Endothelial cell of umbilical vein (primary cell): ENCODE measurements at regions of chr19 and their contacts with region 1.

Region 1: GRCh38 chr19:8466018-8466417 is 21.2 kb downstream of the HNRNPM start:
- DNase-seq: no peak
- H3K4me3 ChIP-seq: no peak overlapping the region
- H3K27ac ChIP-seq: no peak overlapping the region
- H3K4me1 ChIP-seq: no peaks in the 10 kb centered on the region
- H3K27me3 ChIP-seq: no peaks in the 10 kb centered on the region
- CTCF ChIP-seq: no peak
- POLR2A ChIP-seq: no peak

Region 2: GRCh38 chr19:8396563-8397203 is 69.3 kb before region 1 on chr19:
- CTCF ChIA-PET with region 1: no interaction called
- POLR2A ChIA-PET with region 1: no interaction called
- dilution Hi-C with region 1: no loop called
- intact Hi-C with region 1: loop called (anchors 2 kb)
- DNase-seq: peak; percentile 74
- H3K4me3 ChIP-seq: no peak overlapping the region
- H3K27ac ChIP-seq: peak overlapping the region; percentile 23
- H3K4me1 ChIP-seq: peaks cover 28% of the 10 kb centered on the region
- H3K27me3 ChIP-seq: no peaks in the 10 kb centered on the region
- CTCF ChIP-seq: peak; percentile 75 to 91
- POLR2A ChIP-seq: no peak

Region 3: DNA sequence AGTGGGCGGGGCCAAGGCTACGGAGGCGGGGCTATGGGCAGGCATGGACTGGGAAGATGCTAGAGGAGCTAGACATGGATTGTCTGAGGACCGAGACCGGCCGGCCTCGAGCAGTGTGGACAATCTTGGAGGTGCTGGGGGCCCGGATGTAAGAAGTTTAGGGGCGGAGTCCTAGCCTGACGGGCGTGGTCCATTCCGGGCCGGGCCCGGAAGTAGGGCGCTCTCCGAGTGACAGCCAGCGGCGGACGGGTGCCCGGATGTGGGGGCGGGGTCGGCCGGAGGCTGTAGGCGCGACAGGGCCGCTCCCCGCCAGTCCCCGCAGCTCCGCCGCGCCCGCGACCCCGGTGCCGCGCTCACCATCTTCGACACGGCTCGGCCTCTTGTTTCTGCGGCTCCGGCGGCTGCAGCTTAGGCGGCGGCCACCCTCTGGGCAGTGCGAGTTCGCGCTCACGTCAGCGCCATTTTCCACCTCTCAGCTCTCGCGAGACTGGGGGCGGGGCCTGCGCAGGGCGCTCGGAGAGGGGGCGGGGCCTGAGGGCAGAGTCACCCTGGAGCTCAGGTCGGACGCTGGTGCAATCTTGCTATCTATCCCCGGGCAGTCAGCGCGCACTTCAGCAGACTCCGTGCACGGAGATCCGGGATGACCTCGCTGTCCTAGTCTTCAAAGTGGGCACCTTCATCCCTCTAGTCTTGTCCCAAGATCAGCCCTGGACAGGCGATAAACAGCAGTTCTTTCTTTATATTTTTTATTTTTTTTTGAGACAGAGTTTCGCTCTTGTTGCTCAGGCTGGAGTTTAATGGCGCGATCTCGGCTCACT is 47.9 kb after region 1 on chr19 and contains the start of gene ZNF414:
- CTCF ChIA-PET with region 1: no interaction called
- POLR2A ChIA-PET with region 1: no interaction called
- dilution Hi-C with region 1: no loop called
- intact Hi-C with region 1: no loop called
- DNase-seq: peak; percentile 93
- H3K4me3 ChIP-seq: peak within 1 kb of the TSS; percentile 47 to 95 (median 62)
- H3K27ac ChIP-seq: peak within 1 kb of the TSS; percentile 96
- H3K4me1 ChIP-seq: peaks cover 11% of the 10 kb centered on the region
- H3K27me3 ChIP-seq: peaks cover 1 to 4% of the 10 kb centered on the region in 2 experiments
- CTCF ChIP-seq: no peak
- POLR2A ChIP-seq: peak; percentile 93
- total RNA-seq, gene ZNF414: 14.5 and 20.6 TPM in 2 replicates